Gastrocnemius medialis (tissue), 4 donors: ENCODE measurements at regions of chr5 and their contacts with region 1.

Region 1: DNA sequence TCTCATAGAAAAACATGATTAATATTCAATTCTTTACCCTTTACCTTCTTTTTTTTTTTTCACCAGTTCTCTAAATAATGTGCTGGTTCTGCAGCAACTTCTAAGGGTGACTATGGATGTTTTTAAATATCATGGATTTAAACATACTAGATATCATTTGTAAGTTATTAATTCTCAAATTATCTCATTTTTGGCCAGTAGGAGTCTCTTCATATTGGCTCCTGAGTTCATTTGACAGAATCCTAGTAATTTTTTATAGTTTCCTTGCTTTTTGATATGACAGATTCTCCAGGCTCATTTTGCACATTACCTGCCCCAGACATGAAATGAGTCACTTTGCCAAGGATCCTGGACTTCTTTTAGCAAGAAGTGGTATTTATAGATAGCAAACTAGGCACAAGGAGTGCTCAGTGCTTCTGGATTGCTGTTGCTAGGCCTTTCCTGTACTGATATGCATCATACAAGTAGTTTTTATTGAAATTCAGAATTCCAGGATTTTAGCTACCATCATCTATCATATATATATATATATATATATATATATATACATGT is 201.3 kb upstream of the IL12B start:
- DNase-seq: no peak
- ATAC-seq: no peak
- H3K4me3 ChIP-seq: no peak overlapping the region
- H3K27ac ChIP-seq: no peak overlapping the region
- H3K4me1 ChIP-seq: no peaks in the 10 kb centered on the region
- H3K27me3 ChIP-seq: no peaks in the 10 kb centered on the region
- CTCF ChIP-seq: no peak
- POLR2A ChIP-seq: no peak

Region 2: DNA sequence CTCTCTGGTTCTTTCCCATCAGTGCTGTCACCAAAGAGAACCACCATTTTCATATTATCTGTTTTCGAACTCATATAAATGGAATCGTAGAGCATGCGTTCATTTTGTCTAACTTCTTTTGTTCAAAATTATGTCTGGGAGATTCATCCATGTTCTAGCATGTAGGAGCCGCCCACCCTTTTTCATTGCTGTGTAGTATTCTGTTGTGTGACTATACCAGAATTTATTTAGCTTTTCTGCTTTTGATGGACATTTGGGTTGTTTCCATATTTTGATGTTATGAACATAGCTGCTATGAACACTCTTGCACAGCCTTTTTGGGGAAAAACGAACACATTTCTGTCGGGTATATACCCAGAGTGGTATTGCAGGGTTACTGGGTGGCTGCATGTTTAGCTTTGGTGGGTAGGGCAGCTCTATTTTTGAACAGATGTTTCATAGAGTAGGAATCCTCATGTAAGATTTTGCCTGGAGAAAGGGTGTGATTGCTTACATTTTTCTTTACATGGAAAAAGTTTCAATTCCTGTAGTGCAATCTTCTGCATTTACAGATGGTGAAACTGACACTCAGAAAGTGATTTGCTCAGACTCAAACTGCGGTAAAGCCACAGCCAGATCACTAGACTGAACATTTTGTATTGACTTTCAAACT is 101.1 kb before region 1 on chr5:
- in situ Hi-C with region 1: no loop called
- intact Hi-C with region 1: no loop called
- DNase-seq: no peak
- ATAC-seq: no peak
- H3K4me3 ChIP-seq: no peak overlapping the region
- H3K27ac ChIP-seq: no peak overlapping the region
- H3K4me1 ChIP-seq: no peaks in the 10 kb centered on the region
- H3K27me3 ChIP-seq: no peaks in the 10 kb centered on the region
- CTCF ChIP-seq: no peak
- POLR2A ChIP-seq: no peak

Region 3: GRCh38 chr5:159928122-159928909 is 396.7 kb after region 1 on chr5:
- in situ Hi-C with region 1: loop called in 1 of 4 experiments (anchors 25 kb)
- intact Hi-C with region 1: no loop called
- DNase-seq: no peak
- ATAC-seq: peak; percentile 44 to 67
- H3K4me3 ChIP-seq: no peak overlapping the region
- H3K27ac ChIP-seq: no peak overlapping the region
- H3K4me1 ChIP-seq: peaks cover 7 to 10% of the 10 kb centered on the region in 2 donors
- H3K27me3 ChIP-seq: no peaks in the 10 kb centered on the region
- CTCF ChIP-seq: no peak
- POLR2A ChIP-seq: no peak